ENCODE measurements at regions of chr4 and their contacts with region 1.

Region 1: DNA sequence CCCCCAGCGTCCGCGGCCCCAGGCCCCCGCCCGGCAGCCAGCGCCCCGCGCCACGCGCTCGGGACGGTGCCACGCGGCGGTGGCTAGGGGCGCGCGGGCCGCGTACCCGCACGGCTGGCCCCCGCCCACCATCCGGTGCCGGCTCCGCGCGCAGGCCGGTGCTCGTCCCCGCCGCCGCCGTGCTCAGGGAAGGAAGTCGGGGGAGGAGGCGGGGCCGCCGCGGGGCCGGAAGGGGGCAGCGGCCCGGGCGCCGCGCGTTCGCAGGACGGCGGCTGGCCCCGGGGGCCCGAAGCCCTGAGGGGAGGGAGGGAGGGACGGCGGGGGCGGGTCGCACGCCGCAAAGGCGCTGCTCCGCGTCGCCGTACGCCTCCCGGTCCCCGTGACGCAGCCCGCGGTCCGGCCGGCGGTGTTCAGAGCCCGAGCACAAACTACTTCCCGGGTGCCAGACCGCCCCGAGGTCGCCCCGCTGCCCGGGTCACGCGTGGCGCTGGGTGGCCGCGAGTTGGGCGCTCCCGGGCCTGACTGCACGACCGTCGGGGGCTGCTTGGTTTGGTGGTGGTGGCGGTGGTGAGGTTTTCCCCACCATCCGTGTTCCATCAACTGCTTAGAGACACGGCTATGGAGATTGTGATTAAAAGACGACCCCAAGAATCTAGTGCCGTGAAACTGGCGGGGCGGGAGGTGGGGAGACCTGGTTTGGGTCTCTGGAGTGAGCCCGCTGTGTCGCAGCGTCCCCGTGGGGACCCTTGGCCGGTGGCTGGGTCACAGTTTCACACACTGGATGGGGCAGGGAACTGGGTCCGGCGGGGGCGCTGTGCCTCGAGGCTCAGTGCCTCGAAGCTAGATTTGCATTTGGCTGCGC is at the start of gene DCTD:
- DNase-seq: peak; percentile 71 to 90 (median 80)
- ATAC-seq: peak; percentile 89
- H3K4me3 ChIP-seq: peak within 1 kb of the TSS; percentile 77
- H3K4me3 Mint-ChIP-seq: peak within 1 kb of the TSS; percentile 75 to 95 (median 90)
- H3K27ac ChIP-seq: peak within 1 kb of the TSS; percentile 89
- H3K27ac Mint-ChIP-seq: peak within 1 kb of the TSS; percentile 86 to 98 (median 92)
- H3K4me1 ChIP-seq: peaks cover 20 to 26% of the 10 kb centered on the region in 2 donors
- H3K4me1 Mint-ChIP-seq: peaks cover 17 to 58% (median 50%) of the 10 kb centered on the region in 7 donors
- H3K27me3 ChIP-seq: no peaks in the 10 kb centered on the region
- H3K27me3 Mint-ChIP-seq: peaks cover 0 to 6% (median 0%) of the 10 kb centered on the region in 5 donors
- total RNA-seq, gene DCTD: 61.4 to 76.2 (median 68.9) TPM

Region 2: GRCh38 chr4:182189103-182189878 is 728.1 kb before region 1 on chr4:
- CTCF ChIA-PET with region 1: no interaction called
- POLR2A ChIA-PET with region 1: no interaction called
- intact Hi-C with region 1: no loop called
- DNase-seq: no peak
- ATAC-seq: no peak
- H3K4me3 ChIP-seq: no peak overlapping the region
- H3K4me3 Mint-ChIP-seq: no peak overlapping the region
- H3K27ac ChIP-seq: no peak overlapping the region
- H3K27ac Mint-ChIP-seq: no peak overlapping the region
- H3K4me1 ChIP-seq: no peaks in the 10 kb centered on the region
- H3K4me1 Mint-ChIP-seq: no peaks in the 10 kb centered on the region
- H3K27me3 ChIP-seq: no peaks in the 10 kb centered on the region
- H3K27me3 Mint-ChIP-seq: peaks cover 0 to 8% (median 5%) of the 10 kb centered on the region in 5 donors

Region 3: GRCh38 chr4:182806259-182807252 is 110.9 kb before region 1 on chr4:
- CTCF ChIA-PET with region 1: interaction called, 3 read pairs
- POLR2A ChIA-PET with region 1: interaction called, 4 read pairs
- intact Hi-C with region 1: loop called in 1 of 2 experiments (anchors 1 kb)
- DNase-seq: peak in 8 of 9 donors; percentile 24 to 74 (median 45)
- ATAC-seq: peak; percentile 47
- H3K4me3 ChIP-seq: no peak overlapping the region
- H3K4me3 Mint-ChIP-seq: peak overlapping the region; percentile 64 to 93 (median 80)
- H3K27ac ChIP-seq: no peak overlapping the region
- H3K27ac Mint-ChIP-seq: peak overlapping the region in 6 of 9 donors; percentile 68 to 79 (median 72)
- H3K4me1 ChIP-seq: peaks cover 8 to 16% of the 10 kb centered on the region in 2 donors
- H3K4me1 Mint-ChIP-seq: peaks cover 0 to 20% (median 8%) of the 10 kb centered on the region in 7 donors
- H3K27me3 ChIP-seq: no peaks in the 10 kb centered on the region
- H3K27me3 Mint-ChIP-seq: peaks cover 0 to 13% (median 4%) of the 10 kb centered on the region in 5 donors

Region 4: DNA sequence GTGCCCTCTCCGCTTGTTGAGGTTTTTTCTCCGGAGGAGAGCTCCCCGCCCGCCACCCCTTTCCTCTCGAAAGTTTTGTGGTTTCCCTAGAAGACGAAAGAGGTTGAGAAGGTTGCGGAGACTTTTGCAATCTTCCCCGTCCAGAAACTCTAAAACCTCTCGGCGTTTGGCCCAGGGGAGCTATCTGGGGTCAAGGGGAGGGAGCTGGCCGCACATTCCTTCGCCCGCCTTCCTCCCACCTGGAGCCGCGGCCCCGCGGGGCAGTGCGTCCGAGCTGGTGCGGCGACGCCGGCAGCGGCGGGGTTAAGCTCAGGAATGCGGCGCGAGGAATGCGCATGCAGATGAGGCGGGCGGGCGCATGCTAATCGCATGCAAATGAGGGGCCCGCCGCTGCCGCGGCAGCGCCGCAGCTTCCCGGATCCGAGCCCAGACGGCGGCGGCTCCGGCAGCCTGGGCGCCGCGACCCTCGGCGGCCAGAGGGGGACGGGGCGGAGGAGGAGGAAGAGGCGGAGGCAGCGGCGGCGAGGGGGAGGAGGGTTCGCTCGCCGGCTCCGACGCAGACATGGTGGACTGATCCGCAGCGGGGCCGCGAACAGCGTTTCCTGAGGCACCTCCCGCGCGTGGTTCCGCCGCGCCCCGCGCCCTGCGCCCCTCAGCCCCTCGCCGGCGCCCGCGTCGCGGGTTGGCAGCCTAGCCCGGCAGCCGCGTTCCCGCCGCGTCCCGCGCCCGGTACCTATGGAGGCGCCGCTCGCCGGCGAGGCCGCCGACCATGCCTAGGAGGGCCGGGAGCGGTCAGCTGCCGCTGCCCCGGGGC is 181.5 kb after region 1 on chr4 and contains the start of gene WWC2:
- CTCF ChIA-PET with region 1: no interaction called
- POLR2A ChIA-PET with region 1: interaction called, 5 read pairs
- intact Hi-C with region 1: loop called in 1 of 2 experiments (anchors 1 kb)
- DNase-seq: peak; percentile 40 to 68 (median 62)
- ATAC-seq: peak; percentile 85
- H3K4me3 ChIP-seq: peak within 1 kb of the TSS; percentile 75
- H3K4me3 Mint-ChIP-seq: peak within 1 kb of the TSS; percentile 51 to 87 (median 83)
- H3K27ac ChIP-seq: peak within 1 kb of the TSS; percentile 48
- H3K27ac Mint-ChIP-seq: peak within 1 kb of the TSS in 3 of 9 donors; percentile 56 to 72 (median 68)
- H3K4me1 ChIP-seq: peaks cover 0 to 4% of the 10 kb centered on the region in 2 donors
- H3K4me1 Mint-ChIP-seq: peaks cover 3 to 53% (median 34%) of the 10 kb centered on the region in 7 donors
- H3K27me3 ChIP-seq: peaks cover 0 to 2% of the 10 kb centered on the region in 2 donors
- H3K27me3 Mint-ChIP-seq: peaks cover 0 to 61% (median 0%) of the 10 kb centered on the region in 5 donors
- total RNA-seq, gene WWC2: 0.07 to 13.8 (median 10.9) TPM

Region 5: DNA sequence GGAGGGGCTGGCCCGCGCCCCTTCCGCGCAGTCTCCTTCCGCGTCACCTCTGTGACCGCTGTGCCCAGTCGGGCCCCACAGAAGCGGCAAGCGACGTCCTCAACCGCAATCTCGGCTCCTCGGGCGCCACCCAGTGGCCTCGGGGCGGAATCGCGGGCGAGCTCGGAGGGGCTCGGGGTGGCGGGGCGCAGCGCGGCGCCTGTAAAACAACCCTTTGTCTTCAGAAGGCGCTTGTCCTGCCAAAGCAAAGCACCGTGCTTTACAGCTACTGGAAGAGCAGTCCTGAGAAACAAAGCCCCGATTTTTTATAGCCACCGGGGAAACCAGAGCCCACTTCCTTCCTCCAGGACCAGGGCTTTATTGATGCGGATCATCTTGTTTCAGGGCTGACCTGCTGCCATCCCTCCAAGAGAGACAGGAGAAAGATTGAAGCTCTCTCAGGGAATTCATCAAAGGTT is 489.7 kb after region 1 on chr4:
- CTCF ChIA-PET with region 1: interaction called, 3 read pairs
- POLR2A ChIA-PET with region 1: no interaction called
- intact Hi-C with region 1: loop called in 1 of 2 experiments (anchors 5 kb)
- DNase-seq: peak; percentile 83 to 96 (median 90)
- ATAC-seq: peak; percentile 99
- H3K4me3 ChIP-seq: peak overlapping the region; percentile 78
- H3K4me3 Mint-ChIP-seq: peak overlapping the region; percentile 60 to 88 (median 85)
- H3K27ac ChIP-seq: peak overlapping the region; percentile 72
- H3K27ac Mint-ChIP-seq: peak overlapping the region; percentile 80 to 95 (median 87)
- H3K4me1 ChIP-seq: no peaks in the 10 kb centered on the region
- H3K4me1 Mint-ChIP-seq: peaks cover 5 to 30% (median 17%) of the 10 kb centered on the region in 7 donors
- H3K27me3 ChIP-seq: no peaks in the 10 kb centered on the region
- H3K27me3 Mint-ChIP-seq: peaks cover 0 to 11% (median 0%) of the 10 kb centered on the region in 5 donors

Region 6: GRCh38 chr4:183618681-183619080 is 701.3 kb after region 1 on chr4:
- CTCF ChIA-PET with region 1: no interaction called
- POLR2A ChIA-PET with region 1: no interaction called
- intact Hi-C with region 1: no loop called
- DNase-seq: no peak
- ATAC-seq: no peak
- H3K4me3 ChIP-seq: no peak overlapping the region
- H3K4me3 Mint-ChIP-seq: no peak overlapping the region
- H3K27ac ChIP-seq: no peak overlapping the region
- H3K27ac Mint-ChIP-seq: no peak overlapping the region
- H3K4me1 ChIP-seq: no peaks in the 10 kb centered on the region
- H3K4me1 Mint-ChIP-seq: peaks cover 0 to 3% (median 0%) of the 10 kb centered on the region in 7 donors
- H3K27me3 ChIP-seq: no peaks in the 10 kb centered on the region
- H3K27me3 Mint-ChIP-seq: peaks cover 0 to 22% (median 6%) of the 10 kb centered on the region in 5 donors

Region 7: DNA sequence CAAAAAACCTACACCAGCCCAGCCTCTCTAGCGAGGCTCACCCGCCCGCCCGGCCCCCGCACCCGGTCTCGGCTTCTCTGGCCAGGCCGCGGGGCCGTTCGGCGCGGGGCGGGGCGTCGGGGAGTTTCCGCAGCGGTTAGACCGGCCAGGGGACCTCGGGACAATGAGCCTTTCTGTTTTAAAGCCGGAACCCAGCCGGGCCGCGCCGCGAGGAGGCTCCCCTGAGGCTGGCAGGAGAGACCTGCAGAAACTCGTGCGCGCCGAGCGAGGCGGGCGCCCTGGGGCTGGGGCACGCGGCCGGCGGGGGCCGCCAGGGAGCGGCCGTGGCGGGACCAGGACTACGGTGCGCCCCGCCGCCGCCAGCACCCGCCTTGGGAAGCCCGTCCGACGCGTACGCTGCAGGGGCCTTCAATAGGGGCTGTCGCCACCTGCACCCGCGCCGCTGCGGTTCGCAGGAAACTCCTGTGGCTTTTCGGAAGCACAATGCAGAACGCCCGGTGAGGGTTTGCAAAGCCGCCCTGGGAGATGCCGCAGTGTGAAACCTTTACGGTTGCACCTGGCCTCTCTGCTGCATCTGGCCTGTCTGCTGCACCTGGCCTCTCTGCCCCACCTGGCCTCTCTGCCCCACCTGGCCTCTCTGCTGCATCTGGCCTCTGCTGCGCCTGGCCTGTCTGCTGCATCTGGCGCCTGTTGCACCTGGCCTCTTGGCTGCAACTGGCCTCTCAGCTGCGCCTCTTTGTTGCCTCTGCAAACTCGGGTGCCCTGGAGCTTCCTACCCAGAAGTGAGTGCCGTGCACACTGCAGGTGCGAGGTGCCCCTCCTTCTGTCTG is 805.5 kb after region 1 on chr4:
- CTCF ChIA-PET with region 1: no interaction called
- POLR2A ChIA-PET with region 1: no interaction called
- intact Hi-C with region 1: loop called in 1 of 2 experiments (anchors 5 kb)
- DNase-seq: peak; percentile 17 to 60 (median 41)
- ATAC-seq: peak; percentile 71
- H3K4me3 ChIP-seq: peak overlapping the region; percentile 64
- H3K4me3 Mint-ChIP-seq: peak overlapping the region; percentile 65 to 96 (median 89)
- H3K27ac ChIP-seq: peak overlapping the region; percentile 21
- H3K27ac Mint-ChIP-seq: peak overlapping the region; percentile 33 to 90 (median 75)
- H3K4me1 ChIP-seq: peaks cover 5 to 9% of the 10 kb centered on the region in 2 donors
- H3K4me1 Mint-ChIP-seq: peaks cover 13 to 14% (median 13%) of the 10 kb centered on the region in 7 donors
- H3K27me3 ChIP-seq: no peaks in the 10 kb centered on the region
- H3K27me3 Mint-ChIP-seq: peaks cover 0 to 48% (median 0%) of the 10 kb centered on the region in 5 donors

Measured in naive thymus-derived CD4-positive, alpha-beta T cell (primary cell).